A673 (cell line): ENCODE measurements at regions of chr5 and their contacts with region 1.

Region 1: DNA sequence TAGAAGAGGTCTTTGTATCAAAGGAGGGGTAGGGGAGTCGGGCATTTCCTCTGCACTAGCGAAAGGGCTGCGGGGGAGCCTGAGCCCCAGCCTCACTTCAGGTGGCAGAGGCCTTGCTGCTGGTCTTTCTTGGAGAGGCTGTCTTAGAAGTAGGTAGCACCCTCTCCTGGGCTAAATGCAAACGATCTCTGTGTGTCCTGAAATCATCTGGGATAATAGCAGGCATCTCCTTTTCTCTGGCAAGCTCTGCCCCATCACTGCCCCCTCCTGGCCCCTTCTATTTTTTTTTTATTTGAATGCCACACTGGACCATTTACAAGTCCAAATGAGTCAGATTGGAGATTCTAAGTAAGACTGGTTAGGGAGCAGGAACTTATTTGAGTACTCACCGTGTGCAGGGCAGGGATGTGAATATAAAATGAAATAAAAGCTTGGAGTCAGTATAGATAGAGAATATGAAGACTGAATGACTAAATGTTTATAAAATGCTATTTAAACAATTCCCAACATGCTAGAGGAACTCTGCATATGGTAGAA is 137.1 kb downstream of the FGF1 start:
- DNase-seq: peak; percentile 96
- H3K4me3 ChIP-seq: no peak overlapping the region
- H3K27ac ChIP-seq: peak overlapping the region; percentile 2
- H3K4me1 ChIP-seq: peaks cover 51% of the 10 kb centered on the region
- H3K27me3 ChIP-seq: no peaks in the 10 kb centered on the region
- CTCF ChIP-seq: peak; percentile 98

Region 2: DNA sequence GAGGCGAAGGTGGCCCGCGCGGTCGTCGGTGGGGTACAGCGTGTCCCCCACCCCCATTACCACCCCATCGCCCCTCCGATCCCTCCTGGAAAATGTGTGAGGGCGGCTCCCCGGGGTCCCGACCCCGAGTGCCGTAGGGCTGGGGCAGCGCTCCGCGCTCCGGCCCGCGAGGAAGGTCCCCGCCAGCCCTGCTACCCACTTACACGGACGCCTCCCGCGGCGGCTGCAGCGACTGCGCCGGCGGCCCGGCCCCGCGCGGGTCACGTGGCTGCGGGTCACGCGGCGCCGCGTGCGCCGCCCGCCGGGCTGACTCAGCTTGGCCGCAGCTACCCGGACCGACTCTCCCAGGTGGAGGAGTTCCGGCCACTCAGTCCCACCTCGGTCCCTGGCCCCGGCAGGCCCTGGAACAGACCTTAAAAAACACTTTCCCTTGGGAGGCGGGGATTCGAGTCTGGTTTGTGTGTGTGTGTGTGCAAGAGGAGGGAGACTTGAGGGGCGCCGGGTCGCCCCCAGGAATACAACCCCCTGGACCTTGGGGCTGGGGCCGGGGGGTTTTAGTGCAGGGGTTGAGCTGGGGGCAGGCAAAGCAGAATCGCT is 535.9 kb before region 1 on chr5 and contains the start of gene GNPDA1:
- CTCF ChIA-PET with region 1: no interaction called
- POLR2A ChIA-PET with region 1: no interaction called
- intact Hi-C with region 1: loop called (anchors 10 kb)
- DNase-seq: peak; percentile 74
- H3K4me3 ChIP-seq: peak within 1 kb of the TSS; percentile 72
- H3K27ac ChIP-seq: peak within 1 kb of the TSS; percentile 73
- H3K4me1 ChIP-seq: peaks cover 9% of the 10 kb centered on the region
- H3K27me3 ChIP-seq: no peaks in the 10 kb centered on the region
- CTCF ChIP-seq: no peak
- total RNA-seq, gene GNPDA1: 46.7 and 52.4 TPM in 2 replicates

Region 3: GRCh38 chr5:142316051-142316450 is 232.8 kb before region 1 on chr5:
- CTCF ChIA-PET with region 1: interaction called, 16 read pairs
- POLR2A ChIA-PET with region 1: no interaction called
- intact Hi-C with region 1: loop called (anchors 2 kb)
- DNase-seq: peak; percentile 98
- H3K4me3 ChIP-seq: peak overlapping the region; percentile 18
- H3K27ac ChIP-seq: peak overlapping the region; percentile 65
- H3K4me1 ChIP-seq: peaks cover 78% of the 10 kb centered on the region
- H3K27me3 ChIP-seq: no peaks in the 10 kb centered on the region
- CTCF ChIP-seq: no peak

Region 4: DNA sequence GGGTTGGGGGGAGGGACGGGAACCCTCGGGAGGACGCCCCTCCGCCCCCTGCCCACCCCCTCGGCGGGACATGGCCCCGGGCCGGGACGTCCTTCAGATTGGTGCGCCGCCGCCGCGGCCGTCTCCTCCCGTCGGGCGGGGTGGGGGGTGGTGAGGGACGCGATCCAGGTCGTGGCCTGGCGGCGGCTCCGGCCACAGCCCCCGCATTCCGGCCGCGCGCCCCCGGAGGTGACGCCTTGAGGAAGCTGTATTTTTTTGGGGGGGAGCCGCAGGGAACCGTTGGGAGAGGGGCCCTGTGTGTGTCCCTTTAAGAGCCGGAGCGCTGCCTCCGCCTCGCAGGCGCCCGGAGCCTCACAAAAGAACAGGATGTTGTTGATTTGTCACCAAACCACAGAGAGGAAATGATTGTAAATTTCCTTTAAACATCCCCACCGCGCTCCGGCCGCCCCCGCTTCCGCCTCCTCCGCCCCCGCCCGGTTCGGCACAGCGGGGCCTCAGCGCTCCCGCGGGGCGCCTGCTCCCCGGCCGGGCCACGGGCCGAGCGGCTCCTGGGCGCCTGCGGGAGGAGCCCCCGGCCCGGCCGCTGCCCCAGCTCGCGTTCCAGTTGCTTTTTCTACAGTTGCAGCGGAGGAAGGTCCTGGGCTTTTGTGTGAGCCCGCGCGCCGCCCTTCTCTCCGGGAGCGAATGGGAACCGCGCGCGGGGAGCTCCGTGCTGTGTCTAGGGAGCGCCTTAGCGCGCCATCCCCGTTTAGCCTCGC is 191.9 kb before region 1 on chr5:
- CTCF ChIA-PET with region 1: no interaction called
- POLR2A ChIA-PET with region 1: no interaction called
- intact Hi-C with region 1: loop called (anchors 2 kb)
- DNase-seq: peak; percentile 98
- H3K4me3 ChIP-seq: peak overlapping the region; percentile 44
- H3K27ac ChIP-seq: peak overlapping the region; percentile 99
- H3K4me1 ChIP-seq: peaks cover 60% of the 10 kb centered on the region
- H3K27me3 ChIP-seq: no peaks in the 10 kb centered on the region
- CTCF ChIP-seq: no peak

Region 5: GRCh38 chr5:142529626-142530278 is 19.1 kb before region 1 on chr5:
- CTCF ChIA-PET with region 1: no interaction called
- POLR2A ChIA-PET with region 1: no interaction called
- intact Hi-C with region 1: no loop called
- DNase-seq: no peak
- H3K4me3 ChIP-seq: no peak overlapping the region
- H3K27ac ChIP-seq: no peak overlapping the region
- H3K4me1 ChIP-seq: peaks cover 21% of the 10 kb centered on the region
- H3K27me3 ChIP-seq: no peaks in the 10 kb centered on the region
- CTCF ChIP-seq: no peak

Region 6: GRCh38 chr5:142699184-142699720 is 150.4 kb after region 1 on chr5:
- CTCF ChIA-PET with region 1: interaction called, 5 read pairs
- POLR2A ChIA-PET with region 1: no interaction called
- intact Hi-C with region 1: loop called (anchors 2 kb)
- DNase-seq: peak; percentile 93
- H3K4me3 ChIP-seq: no peak overlapping the region
- H3K27ac ChIP-seq: no peak overlapping the region
- H3K4me1 ChIP-seq: peaks cover 40% of the 10 kb centered on the region
- H3K27me3 ChIP-seq: no peaks in the 10 kb centered on the region
- CTCF ChIP-seq: peak; percentile 95

Region 7: GRCh38 chr5:143001764-143002351 is 453.1 kb after region 1 on chr5:
- CTCF ChIA-PET with region 1: no interaction called
- POLR2A ChIA-PET with region 1: no interaction called
- intact Hi-C with region 1: no loop called
- DNase-seq: peak; percentile 21
- H3K4me3 ChIP-seq: no peak overlapping the region
- H3K27ac ChIP-seq: peak overlapping the region; percentile 89
- H3K4me1 ChIP-seq: peaks cover 31% of the 10 kb centered on the region
- H3K27me3 ChIP-seq: no peaks in the 10 kb centered on the region
- CTCF ChIP-seq: no peak